ENCODE measurements at regions of chr3 and their contacts with region 1.

Region 1: DNA sequence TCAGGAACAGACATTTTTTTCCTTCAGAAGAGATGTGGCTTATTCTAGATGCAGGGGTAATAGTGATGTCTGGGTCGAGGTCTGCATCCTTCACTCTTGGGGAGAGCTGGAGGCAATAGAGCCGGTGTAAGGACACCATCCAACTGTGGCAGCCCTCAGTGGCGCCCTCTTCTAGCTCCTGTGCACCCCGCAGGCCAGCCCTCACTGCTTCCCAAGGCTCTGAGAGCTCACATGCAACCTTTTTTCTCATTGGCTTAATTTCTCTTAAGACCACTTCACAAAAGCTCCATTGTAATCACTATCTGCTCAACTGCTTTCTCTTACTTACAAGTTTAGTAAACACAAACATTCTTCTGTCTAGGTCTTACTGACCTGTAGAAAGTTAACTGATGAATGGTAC is 3.9 kb upstream of the VPS8 start:
- DNase-seq: no peak
- ATAC-seq: no peak
- H3K4me3 ChIP-seq: no peak overlapping the region
- H3K27ac ChIP-seq: no peak overlapping the region
- H3K4me1 ChIP-seq: peaks cover 4% of the 10 kb centered on the region
- H3K27me3 ChIP-seq: no peaks in the 10 kb centered on the region
- CTCF ChIP-seq: 0 out of 2 replicates have a peak, but pooled peaks have one; percentile 23
- POLR2A ChIP-seq: no peak
- RAD21 ChIP-seq: no peak

Region 2: DNA sequence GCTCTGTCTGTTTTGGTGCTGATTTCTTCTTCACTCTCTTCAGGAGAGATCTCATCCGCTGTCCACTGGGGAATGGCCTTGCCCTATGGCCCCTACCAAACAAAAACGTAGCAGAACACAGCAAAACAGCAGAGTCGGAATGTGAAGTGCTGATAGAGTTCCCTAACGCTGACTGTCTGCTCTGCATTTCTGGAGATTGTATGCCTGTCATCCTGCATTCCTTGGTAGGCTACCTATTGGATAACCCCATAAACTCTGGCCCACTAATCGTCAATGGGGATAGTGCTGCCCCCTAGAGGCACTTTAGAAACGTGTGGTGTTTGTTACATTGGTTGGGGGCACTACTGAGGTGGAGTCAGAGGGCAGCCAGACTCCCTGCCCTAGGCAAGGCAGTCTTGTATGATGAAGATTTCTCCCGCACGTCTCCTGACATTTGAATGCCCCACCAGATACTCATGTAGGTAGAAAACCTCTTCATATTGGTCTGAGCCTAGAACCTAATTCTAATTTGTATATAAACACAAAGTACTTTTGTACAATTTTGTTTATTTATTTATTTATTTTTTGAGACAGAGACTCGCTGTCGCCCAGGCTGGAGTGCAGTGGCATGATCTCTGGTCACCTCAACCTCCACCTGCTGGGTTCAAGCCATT is 80.5 kb before region 1 on chr3:
- CTCF ChIA-PET with region 1: interaction called, 12 read pairs
- POLR2A ChIA-PET with region 1: no interaction called
- dilution Hi-C with region 1: no loop called
- in situ Hi-C with region 1: no loop called
- intact Hi-C with region 1: no loop called
- DNase-seq: peak; percentile 72
- ATAC-seq: peak; percentile 95
- H3K4me3 ChIP-seq: no peak overlapping the region
- H3K27ac ChIP-seq: no peak overlapping the region
- H3K4me1 ChIP-seq: peaks cover 3% of the 10 kb centered on the region; the same call in 1 of the 2 replicates
- H3K27me3 ChIP-seq: peaks cover 8% of the 10 kb centered on the region
- CTCF ChIP-seq: peak; percentile 70
- POLR2A ChIP-seq: no peak
- RAD21 ChIP-seq: peak; percentile 67

Region 3: GRCh38 chr3:184777336-184778004 is 30.6 kb before region 1 on chr3:
- CTCF ChIA-PET with region 1: interaction called, 5 read pairs
- POLR2A ChIA-PET with region 1: no interaction called
- dilution Hi-C with region 1: no loop called
- in situ Hi-C with region 1: no loop called
- intact Hi-C with region 1: loop called (anchors 1 kb)
- DNase-seq: peak; percentile 97
- ATAC-seq: peak; percentile 95
- H3K4me3 ChIP-seq: no peak overlapping the region
- H3K27ac ChIP-seq: no peak overlapping the region
- H3K4me1 ChIP-seq: peaks cover 10% of the 10 kb centered on the region
- H3K27me3 ChIP-seq: no peaks in the 10 kb centered on the region
- CTCF ChIP-seq: peak; percentile 95
- POLR2A ChIP-seq: no peak
- RAD21 ChIP-seq: peak; percentile 98